ENCODE measurements at regions of chr3 and their contacts with region 1.

Region 1: GRCh38 chr3:87771341-87772192 is 287.2 kb downstream of the CGGBP1 start:
- DNase-seq: peak; percentile 45 to 46
- H3K4me3 ChIP-seq: no peak overlapping the region
- H3K4me3 Mint-ChIP-seq: no peak overlapping the region
- H3K27ac Mint-ChIP-seq: no peak overlapping the region
- H3K4me1 ChIP-seq: no peaks in the 10 kb centered on the region
- H3K4me1 Mint-ChIP-seq: no peaks in the 10 kb centered on the region
- H3K27me3 ChIP-seq: no peaks in the 10 kb centered on the region
- H3K27me3 Mint-ChIP-seq: peaks cover 6% of the 10 kb centered on the region
- CTCF ChIP-seq: peak; percentile 43 to 75

Region 2: GRCh38 chr3:88113311-88114162 is 342.0 kb after region 1 on chr3:
- CTCF ChIA-PET with region 1: no interaction called
- POLR2A ChIA-PET with region 1: no interaction called
- intact Hi-C with region 1: loop called (anchors 1 kb)
- DNase-seq: peak; percentile 50 to 79
- H3K4me3 ChIP-seq: no peak overlapping the region
- H3K4me3 Mint-ChIP-seq: no peak overlapping the region
- H3K27ac Mint-ChIP-seq: no peak overlapping the region
- H3K4me1 ChIP-seq: no peaks in the 10 kb centered on the region
- H3K4me1 Mint-ChIP-seq: no peaks in the 10 kb centered on the region
- H3K27me3 ChIP-seq: no peaks in the 10 kb centered on the region
- H3K27me3 Mint-ChIP-seq: no peaks in the 10 kb centered on the region
- CTCF ChIP-seq: peak; percentile 49 to 70

Region 3: DNA sequence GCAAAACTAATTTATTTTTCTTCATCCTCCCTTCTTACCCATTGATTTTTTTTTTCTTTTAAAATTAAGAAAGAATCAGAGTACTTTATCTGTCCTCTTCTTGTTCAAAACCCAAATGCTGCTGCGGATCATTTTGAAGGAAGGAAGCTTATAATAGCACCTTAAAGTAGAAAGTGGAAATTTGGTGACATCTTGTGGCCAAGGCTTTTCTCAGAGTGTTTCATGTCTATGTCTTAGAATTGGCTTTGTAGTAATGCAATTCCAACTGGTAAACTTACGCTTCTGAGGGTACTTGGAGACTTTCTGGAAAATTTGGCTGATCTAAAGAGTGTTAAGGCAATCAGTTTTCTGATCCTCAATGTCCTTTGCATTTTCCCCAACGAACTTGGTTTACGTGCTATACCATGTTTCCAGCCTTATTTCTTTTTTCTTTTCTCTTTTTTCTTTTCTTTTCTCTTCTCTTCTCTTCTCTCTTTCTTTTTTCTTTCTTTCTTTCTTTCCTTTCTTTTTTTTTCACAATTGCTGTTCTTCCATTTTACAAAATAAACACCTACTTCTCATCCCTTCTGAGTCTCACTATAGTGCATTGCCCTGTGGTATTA is 408.9 kb after region 1 on chr3:
- CTCF ChIA-PET with region 1: no interaction called
- POLR2A ChIA-PET with region 1: no interaction called
- intact Hi-C with region 1: loop called (anchors 1 kb)
- DNase-seq: peak in 1 of 2 experiments; percentile 22
- H3K4me3 ChIP-seq: no peak overlapping the region
- H3K4me3 Mint-ChIP-seq: no peak overlapping the region
- H3K27ac Mint-ChIP-seq: no peak overlapping the region
- H3K4me1 ChIP-seq: no peaks in the 10 kb centered on the region
- H3K4me1 Mint-ChIP-seq: no peaks in the 10 kb centered on the region
- H3K27me3 ChIP-seq: no peaks in the 10 kb centered on the region
- H3K27me3 Mint-ChIP-seq: peaks cover 2% of the 10 kb centered on the region
- CTCF ChIP-seq: peak in 1 of 2 experiments; percentile 38

Measured in Caco-2 (cell line).